ENCODE measurements at regions of chr3 and their contacts with region 1.

Region 1: DNA sequence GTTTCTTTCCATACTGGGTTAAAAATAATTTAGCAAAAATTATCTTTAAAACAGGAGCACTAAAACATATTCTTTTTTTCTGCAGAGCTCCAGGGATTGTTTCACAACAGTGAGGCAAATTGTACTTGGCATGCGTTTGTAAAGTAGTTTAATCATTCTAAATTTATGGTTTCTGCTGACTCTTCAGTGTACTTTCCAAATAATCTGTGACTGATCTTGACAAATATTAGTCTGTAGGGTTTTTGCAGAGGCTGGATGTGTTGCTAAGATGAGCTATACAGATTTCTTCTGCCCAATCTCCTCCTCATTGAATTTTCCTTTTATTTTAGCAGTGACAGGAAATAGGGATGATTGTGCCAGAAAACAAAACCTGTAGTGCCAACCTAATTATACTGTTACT is 328.0 kb upstream of the MANF start:
- DNase-seq: no peak
- ATAC-seq: no peak
- H3K4me3 ChIP-seq: no peak overlapping the region
- H3K27ac ChIP-seq: no peak overlapping the region
- H3K4me1 ChIP-seq: no peaks in the 10 kb centered on the region
- H3K27me3 ChIP-seq: no peaks in the 10 kb centered on the region
- CTCF ChIP-seq: no peak

Region 2: GRCh38 chr3:51982782-51983577 is 925.9 kb after region 1 on chr3 and contains the start of gene ACY1:
- CTCF ChIA-PET with region 1: no interaction called
- POLR2A ChIA-PET with region 1: interaction called, 15 read pairs
- in situ Hi-C with region 1: no loop called
- intact Hi-C with region 1: no loop called
- DNase-seq: no peak
- ATAC-seq: peak; percentile 91
- H3K4me3 ChIP-seq: peak within 1 kb of the TSS; percentile 63 to 73
- H3K27ac ChIP-seq: peak within 1 kb of the TSS; percentile 89
- H3K4me1 ChIP-seq: peaks cover 12% of the 10 kb centered on the region
- H3K27me3 ChIP-seq: no peaks in the 10 kb centered on the region
- CTCF ChIP-seq: no peak
- total RNA-seq, gene ACY1: 50.3 TPM